Activated CD8-positive, alpha-beta T cell treated with anti-CD3 and anti-CD28 coated beads, Interleukin-2, amount 10 ng/mL, durations not matched to agents 7 days and 5 days (primary cell): ENCODE measurements at regions of chr5 and their contacts with region 1.

Region 1: GRCh38 chr5:151126199-151126645 is 31.4 kb downstream of the ANXA6 start:
- DNase-seq: peak; percentile 78
- ATAC-seq: peak; percentile 67
- H3K4me3 Mint-ChIP-seq: no peak overlapping the region
- H3K27ac Mint-ChIP-seq: peak overlapping the region; percentile 88
- H3K4me1 Mint-ChIP-seq: peaks cover 43% of the 10 kb centered on the region
- H3K27me3 Mint-ChIP-seq: no peaks in the 10 kb centered on the region

Region 2: DNA sequence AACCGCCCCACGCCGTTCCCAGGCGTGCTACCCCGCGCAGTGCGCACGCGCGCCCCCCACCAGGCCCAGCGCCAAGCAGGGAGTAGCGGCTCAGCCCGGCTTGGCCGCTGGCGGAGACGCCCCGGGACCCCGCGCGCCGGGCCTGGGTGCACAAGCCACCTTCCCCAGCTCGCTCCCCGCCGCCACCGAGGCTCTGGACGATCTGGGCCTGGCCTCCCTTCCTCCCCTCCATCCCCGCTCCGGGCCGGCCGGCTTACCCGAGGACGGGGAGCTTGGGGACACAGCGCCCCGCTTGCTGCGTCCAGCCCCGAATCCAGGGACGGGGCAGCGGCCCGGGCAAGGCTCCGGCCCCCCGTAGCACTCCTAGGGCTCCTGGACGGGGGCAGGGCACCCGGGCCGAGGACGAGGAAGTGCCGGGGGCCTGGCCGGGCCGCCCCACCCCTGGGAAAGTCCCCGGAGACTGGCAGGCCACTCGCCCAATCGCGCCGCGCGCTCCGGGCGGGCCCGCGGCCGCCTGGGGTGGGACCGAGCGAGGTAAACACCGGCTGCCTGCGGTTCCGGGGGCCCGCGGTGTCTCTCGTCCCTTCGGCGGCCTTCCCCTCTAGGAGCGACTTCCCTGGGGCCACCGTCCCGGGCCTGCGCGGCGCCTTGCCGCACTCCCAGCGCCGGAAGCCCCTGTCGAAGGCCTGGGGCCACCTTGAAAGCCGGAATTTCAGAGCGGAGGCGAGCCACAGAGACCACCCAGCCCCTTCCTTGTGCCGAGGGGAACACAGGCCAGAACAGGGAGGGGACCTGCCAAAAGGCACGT is 45.4 kb before region 1 on chr5 and contains the start of gene TNIP1:
- CTCF ChIA-PET with region 1: interaction called, 15 read pairs
- POLR2A ChIA-PET with region 1: interaction called, 5 read pairs
- DNase-seq: peak; percentile 93
- ATAC-seq: peak; percentile 91
- H3K4me3 Mint-ChIP-seq: peak within 1 kb of the TSS; percentile 85
- H3K27ac Mint-ChIP-seq: peak within 1 kb of the TSS; percentile 86
- H3K4me1 Mint-ChIP-seq: peaks cover 82% of the 10 kb centered on the region
- H3K27me3 Mint-ChIP-seq: no peaks in the 10 kb centered on the region
- total RNA-seq, gene TNIP1: 132 to 138 TPM

Region 3: DNA sequence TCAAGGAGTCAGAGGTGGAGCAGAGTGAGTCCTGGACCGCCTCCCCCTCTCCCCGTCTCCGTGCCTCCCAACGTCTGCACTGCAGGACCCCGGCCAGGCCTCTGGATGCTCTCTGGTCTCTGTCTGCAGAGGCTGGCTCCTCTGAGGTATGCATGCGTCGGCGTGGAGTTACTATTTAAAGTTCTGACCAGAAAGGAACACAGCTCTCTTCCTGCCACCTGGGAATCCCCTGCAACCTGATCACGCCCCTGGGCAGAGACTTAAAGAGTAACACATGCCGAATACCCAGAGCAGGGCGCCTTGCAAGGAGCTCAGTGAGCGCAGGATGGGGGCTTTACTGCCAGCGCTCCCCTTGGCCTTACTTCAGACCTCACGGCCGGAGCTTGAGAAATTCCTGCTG is 15.3 kb after region 1 on chr5:
- CTCF ChIA-PET with region 1: interaction called, 172 read pairs
- POLR2A ChIA-PET with region 1: interaction called, 8 read pairs
- DNase-seq: peak; percentile 70
- ATAC-seq: peak; percentile 79
- H3K4me3 Mint-ChIP-seq: peak overlapping the region; percentile 58
- H3K27ac Mint-ChIP-seq: peak overlapping the region; percentile 76
- H3K4me1 Mint-ChIP-seq: peaks cover 93% of the 10 kb centered on the region
- H3K27me3 Mint-ChIP-seq: no peaks in the 10 kb centered on the region

Region 4: DNA sequence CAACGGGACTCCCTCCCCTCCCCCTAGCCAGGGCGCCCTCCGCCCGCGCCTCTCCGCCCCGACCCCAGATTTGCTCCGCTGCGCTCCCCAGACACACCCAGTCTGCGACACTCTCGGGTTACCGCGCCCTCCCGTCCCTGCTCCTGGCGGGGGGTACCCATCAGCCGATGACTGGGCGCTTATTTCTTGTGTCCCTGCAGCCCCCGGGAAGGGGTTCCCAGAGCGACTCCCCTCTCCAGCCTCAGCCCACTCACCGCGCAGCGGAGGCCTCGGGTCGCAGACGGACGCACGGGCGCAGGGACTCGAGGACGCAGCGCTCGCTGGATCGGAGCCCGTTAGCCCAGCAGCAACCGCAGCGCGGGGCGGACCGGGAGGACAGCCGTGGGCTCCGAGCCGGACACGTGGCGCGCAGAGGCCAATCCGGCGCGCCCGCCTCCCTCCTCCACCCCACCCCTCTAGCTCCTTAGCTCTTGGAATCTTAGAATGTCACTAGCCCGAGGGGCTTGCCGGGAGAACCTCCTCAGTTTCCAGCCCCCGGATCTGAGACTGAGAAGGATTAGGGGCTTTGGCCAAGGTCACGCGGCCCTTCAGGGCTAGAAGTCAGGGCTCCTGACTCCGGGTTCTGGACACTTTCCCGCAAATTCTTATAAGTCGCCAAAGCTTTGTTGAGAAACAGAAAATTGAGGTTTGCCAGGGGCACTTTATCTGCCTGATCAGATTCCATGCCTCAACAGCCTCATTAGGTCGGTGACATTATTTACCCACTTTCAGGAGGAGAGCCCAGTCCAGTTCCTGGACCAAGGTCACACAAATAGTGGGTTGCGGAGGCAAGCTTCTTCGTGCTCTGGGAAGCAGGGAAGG is 31.4 kb after region 1 on chr5 and contains the start of gene ANXA6:
- CTCF ChIA-PET with region 1: interaction called, 491 read pairs
- POLR2A ChIA-PET with region 1: interaction called, 7 read pairs
- DNase-seq: peak; percentile 76
- ATAC-seq: peak; percentile 81
- H3K4me3 Mint-ChIP-seq: peak within 1 kb of the TSS; percentile 95
- H3K27ac Mint-ChIP-seq: peak within 1 kb of the TSS; percentile 89
- H3K4me1 Mint-ChIP-seq: peaks cover 47% of the 10 kb centered on the region
- H3K27me3 Mint-ChIP-seq: peaks cover 4% of the 10 kb centered on the region
- total RNA-seq, gene ANXA6: 481 to 495 TPM

Region 5: DNA sequence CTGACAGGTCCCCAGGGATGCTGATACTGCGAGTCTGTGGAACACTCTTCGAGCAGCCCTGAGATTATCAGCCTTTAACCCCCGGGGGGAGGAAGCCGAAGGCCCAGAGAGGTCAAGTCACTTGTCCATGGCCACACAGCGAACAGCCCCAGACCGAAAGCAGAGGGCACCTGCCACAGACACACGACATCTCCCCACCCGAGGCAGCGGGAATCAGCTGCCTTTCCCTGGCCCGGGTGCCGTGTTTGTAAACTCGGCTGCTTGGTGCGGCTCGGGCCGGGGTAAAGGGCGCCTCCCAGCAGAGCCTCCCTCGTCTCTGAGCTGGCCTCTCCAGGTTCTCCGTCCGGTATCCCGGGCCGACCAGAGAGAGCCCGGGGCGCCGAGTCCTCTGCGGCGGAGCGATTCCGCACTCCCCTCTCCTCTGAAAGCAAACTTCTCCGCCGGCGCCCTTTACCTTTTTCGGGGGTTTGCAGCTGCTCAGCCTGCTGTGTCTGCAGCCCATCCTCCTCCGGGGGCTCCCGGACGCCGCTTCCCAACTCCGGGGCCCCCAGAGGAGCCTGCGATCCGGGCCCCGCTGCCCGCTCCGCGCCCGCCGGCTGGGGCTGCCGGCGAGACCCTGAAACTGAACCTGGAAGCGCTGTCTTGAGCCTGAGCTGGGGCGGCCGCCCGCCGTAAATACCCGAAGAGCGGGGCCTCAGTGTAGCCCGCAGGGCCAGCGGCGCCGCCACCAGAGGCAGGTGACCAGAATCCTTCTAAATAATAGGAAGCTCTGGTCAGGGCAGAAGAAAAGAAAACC is 97.4 kb after region 1 on chr5 and contains the start of gene CCDC69:
- CTCF ChIA-PET with region 1: interaction called, 25 read pairs
- POLR2A ChIA-PET with region 1: interaction called, 3 read pairs
- DNase-seq: peak; percentile 71
- ATAC-seq: peak; percentile 77
- H3K4me3 Mint-ChIP-seq: peak within 1 kb of the TSS; percentile 85
- H3K27ac Mint-ChIP-seq: peak within 1 kb of the TSS; percentile 91
- H3K4me1 Mint-ChIP-seq: peaks cover 55% of the 10 kb centered on the region
- H3K27me3 Mint-ChIP-seq: no peaks in the 10 kb centered on the region
- total RNA-seq, gene CCDC69: 87.6 to 92.7 TPM